ENCODE measurements at regions of chr19 and their contacts with region 1.

Region 1: GRCh38 chr19:46834121-46834520 is 16.5 kb downstream of the AP2S1 start:
- DNase-seq: no peak
- ATAC-seq: no peak
- H3K4me3 ChIP-seq: no peak overlapping the region
- H3K27ac ChIP-seq: no peak overlapping the region
- H3K4me1 ChIP-seq: no peaks in the 10 kb centered on the region
- H3K27me3 ChIP-seq: no peaks in the 10 kb centered on the region
- CTCF ChIP-seq: no peak

Region 2: GRCh38 chr19:46478356-46478986 is 355.6 kb before region 1 on chr19:
- CTCF ChIA-PET with region 1: no interaction called
- POLR2A ChIA-PET with region 1: no interaction called
- in situ Hi-C with region 1: no loop called
- intact Hi-C with region 1: no loop called
- DNase-seq: no peak
- ATAC-seq: no peak
- H3K4me3 ChIP-seq: no peak overlapping the region
- H3K27ac ChIP-seq: no peak overlapping the region
- H3K4me1 ChIP-seq: no peaks in the 10 kb centered on the region
- H3K27me3 ChIP-seq: no peaks in the 10 kb centered on the region
- CTCF ChIP-seq: no peak

Region 3: DNA sequence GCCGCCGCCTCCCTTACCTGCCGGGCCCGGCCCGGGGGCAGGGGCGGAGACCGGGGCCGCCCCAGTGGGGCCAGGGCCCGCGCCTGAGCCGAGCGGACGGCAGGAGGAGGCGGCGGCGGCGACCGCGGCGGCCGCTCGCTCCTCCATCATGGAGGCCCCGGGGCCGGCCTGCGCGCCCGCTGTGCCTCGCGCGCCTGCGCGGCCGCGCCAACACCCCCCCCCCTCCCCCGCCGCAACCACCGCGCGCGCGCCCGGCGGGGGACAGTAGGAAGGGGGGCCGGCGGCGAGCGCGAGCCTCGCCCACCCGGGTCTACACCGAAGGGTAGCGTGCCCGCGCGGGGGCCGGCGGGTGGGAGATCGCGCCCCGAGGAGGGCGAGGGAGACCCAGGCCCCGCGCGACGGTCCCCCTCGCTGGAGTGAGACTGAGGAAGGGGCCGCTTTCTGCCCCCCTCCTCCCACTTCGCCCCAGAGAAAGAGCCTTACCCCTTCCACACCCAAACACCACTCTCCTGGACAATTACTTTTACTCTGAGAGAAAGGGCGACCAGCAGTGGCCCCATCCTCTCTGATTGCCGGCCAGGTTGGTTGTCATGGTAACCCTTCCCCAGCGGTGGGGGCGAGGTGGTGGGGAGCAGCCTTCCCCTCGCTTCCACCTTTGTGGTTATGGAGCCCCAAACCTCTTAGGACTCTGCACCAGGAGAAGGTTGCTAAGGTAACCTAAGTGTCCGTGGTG is 87.7 kb before region 1 on chr19 and contains the start of gene STRN4:
- CTCF ChIA-PET with region 1: interaction called, 13 read pairs
- POLR2A ChIA-PET with region 1: interaction called, 12 read pairs
- in situ Hi-C with region 1: no loop called
- intact Hi-C with region 1: no loop called
- DNase-seq: no peak
- ATAC-seq: peak; percentile 79
- H3K4me3 ChIP-seq: peak within 1 kb of the TSS; percentile 82 to 92
- H3K27ac ChIP-seq: peak within 1 kb of the TSS; percentile 83
- H3K4me1 ChIP-seq: peaks cover 3% of the 10 kb centered on the region; the same call in 1 of the 2 replicates
- H3K27me3 ChIP-seq: no peaks in the 10 kb centered on the region
- CTCF ChIP-seq: no peak
- total RNA-seq, gene STRN4: 89.5 TPM

Region 4: GRCh38 chr19:46759817-46760333 is 74.2 kb before region 1 on chr19:
- CTCF ChIA-PET with region 1: no interaction called
- POLR2A ChIA-PET with region 1: no interaction called
- in situ Hi-C with region 1: no loop called
- intact Hi-C with region 1: loop called (anchors 5 kb)
- DNase-seq: no peak
- ATAC-seq: no peak
- H3K4me3 ChIP-seq: no peak overlapping the region
- H3K27ac ChIP-seq: no peak overlapping the region
- H3K4me1 ChIP-seq: no peaks in the 10 kb centered on the region
- H3K27me3 ChIP-seq: no peaks in the 10 kb centered on the region
- CTCF ChIP-seq: no peak

Region 5: GRCh38 chr19:46847528-46847927 is 13.4 kb after region 1 on chr19:
- CTCF ChIA-PET with region 1: no interaction called
- POLR2A ChIA-PET with region 1: no interaction called
- in situ Hi-C with region 1: no loop called
- intact Hi-C with region 1: no loop called
- DNase-seq: no peak
- ATAC-seq: no peak
- H3K4me3 ChIP-seq: no peak overlapping the region
- H3K27ac ChIP-seq: no peak overlapping the region
- H3K4me1 ChIP-seq: peaks cover 7% of the 10 kb centered on the region; the same call in 1 of the 2 replicates
- H3K27me3 ChIP-seq: no peaks in the 10 kb centered on the region
- CTCF ChIP-seq: no peak